Sciatic nerve (tissue), 2 donors: ENCODE measurements at regions of chr2 and their contacts with region 1.

Region 1: DNA sequence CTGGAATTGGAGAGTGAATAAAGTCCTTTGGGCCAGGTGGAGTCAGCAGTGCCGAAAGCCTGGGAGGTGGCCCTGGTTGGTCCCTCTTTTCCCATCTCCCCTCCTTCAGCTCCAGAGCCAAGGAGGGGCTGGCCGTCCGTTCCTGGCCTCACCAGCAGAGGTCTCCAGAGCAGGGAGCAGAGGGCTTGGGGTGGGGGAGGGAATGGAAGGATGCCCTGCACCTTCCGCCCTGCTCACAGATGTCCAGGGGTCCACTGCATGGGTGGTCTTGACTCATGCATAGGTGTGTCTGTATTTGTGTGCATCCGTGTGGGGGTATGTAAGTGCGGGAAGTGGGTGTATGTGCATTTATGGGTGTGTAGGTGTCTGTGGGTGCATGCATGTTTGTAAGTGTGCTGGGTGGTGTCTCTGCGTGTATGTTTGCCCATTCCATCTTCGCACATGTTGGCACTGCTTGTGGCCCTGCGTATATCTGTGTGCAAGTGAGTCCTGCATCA is 201.8 kb downstream of the ZFP36L2 start:
- DNase-seq: peak; percentile 89
- ATAC-seq: peak; percentile 81

Region 2: GRCh38 chr2:42639340-42640077 is 385.1 kb before region 1 on chr2:
- intact Hi-C with region 1: no loop called
- DNase-seq: no peak
- ATAC-seq: no peak

Region 3: GRCh38 chr2:43105586-43106558 is 81.3 kb after region 1 on chr2:
- intact Hi-C with region 1: loop called (anchors 10 kb)
- DNase-seq: no peak
- ATAC-seq: peak; percentile 27